ENCODE measurements at regions of chr6 and their contacts with region 1.

Region 1: GRCh38 chr6:83067448-83068413 is at the start of gene DOP1A:
- DNase-seq: peak; percentile 100
- H3K4me3 ChIP-seq: peak within 1 kb of the TSS; percentile 81 to 97 (median 92)
- H3K27ac ChIP-seq: peak within 1 kb of the TSS; percentile 83 to 95 (median 94)
- H3K4me1 ChIP-seq: peaks cover 3 to 84% (median 61%) of the 10 kb centered on the region in 6 donors
- H3K27me3 ChIP-seq: no peaks in the 10 kb centered on the region
- CTCF ChIP-seq: peak; percentile 80 to 98 (median 95)
- POLR2A ChIP-seq: no peak
- total RNA-seq, gene DOP1A: 23.0 to 47.6 (median 30.3) TPM

Region 2: DNA sequence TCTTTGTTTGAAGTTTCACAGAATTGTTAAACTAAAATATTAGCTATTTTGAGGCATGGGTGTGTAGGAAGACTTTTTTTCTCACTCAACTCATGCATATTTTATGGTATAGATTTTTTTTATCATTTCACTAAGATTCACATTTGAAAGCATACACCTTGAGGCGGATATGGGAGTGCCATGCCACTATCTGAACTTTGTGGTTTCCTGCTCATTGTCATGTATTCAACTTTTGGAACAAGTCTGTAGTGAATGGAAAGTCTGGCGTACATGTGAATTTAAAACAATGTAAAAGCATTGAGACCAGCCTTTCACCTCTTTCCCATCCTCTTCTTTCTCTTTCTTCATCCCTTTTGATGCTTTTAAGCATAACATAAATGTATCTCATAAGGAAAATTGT is 556.2 kb before region 1 on chr6:
- intact Hi-C with region 1: no loop called
- DNase-seq: no peak
- H3K4me3 ChIP-seq: no peak overlapping the region
- H3K27ac ChIP-seq: no peak overlapping the region
- H3K4me1 ChIP-seq: no peaks in the 10 kb centered on the region
- H3K27me3 ChIP-seq: no peaks in the 10 kb centered on the region
- CTCF ChIP-seq: no peak
- POLR2A ChIP-seq: no peak

Region 3: DNA sequence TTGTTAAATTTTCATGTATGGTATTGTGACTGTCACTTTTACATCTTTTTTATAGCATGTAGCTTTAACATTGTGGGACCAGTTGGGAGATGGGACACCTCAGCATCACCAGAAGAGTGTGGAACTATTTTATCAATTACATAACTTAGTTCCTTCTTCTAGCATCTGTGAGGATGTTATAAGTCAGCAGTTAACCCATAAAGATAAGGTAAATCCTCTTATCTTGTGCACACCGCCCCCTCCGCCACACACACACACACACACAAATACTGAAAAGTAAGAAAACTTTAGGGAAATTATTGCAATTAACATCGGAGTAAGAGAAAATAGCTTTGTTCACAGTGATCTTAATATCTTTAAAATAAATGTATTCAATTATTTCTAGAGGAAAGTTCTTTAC is 64.4 kb after region 1 on chr6:
- intact Hi-C with region 1: no loop called
- DNase-seq: no peak
- H3K4me3 ChIP-seq: no peak overlapping the region
- H3K27ac ChIP-seq: no peak overlapping the region
- H3K4me1 ChIP-seq: no peaks in the 10 kb centered on the region
- H3K27me3 ChIP-seq: no peaks in the 10 kb centered on the region
- CTCF ChIP-seq: no peak
- POLR2A ChIP-seq: no peak

Region 4: DNA sequence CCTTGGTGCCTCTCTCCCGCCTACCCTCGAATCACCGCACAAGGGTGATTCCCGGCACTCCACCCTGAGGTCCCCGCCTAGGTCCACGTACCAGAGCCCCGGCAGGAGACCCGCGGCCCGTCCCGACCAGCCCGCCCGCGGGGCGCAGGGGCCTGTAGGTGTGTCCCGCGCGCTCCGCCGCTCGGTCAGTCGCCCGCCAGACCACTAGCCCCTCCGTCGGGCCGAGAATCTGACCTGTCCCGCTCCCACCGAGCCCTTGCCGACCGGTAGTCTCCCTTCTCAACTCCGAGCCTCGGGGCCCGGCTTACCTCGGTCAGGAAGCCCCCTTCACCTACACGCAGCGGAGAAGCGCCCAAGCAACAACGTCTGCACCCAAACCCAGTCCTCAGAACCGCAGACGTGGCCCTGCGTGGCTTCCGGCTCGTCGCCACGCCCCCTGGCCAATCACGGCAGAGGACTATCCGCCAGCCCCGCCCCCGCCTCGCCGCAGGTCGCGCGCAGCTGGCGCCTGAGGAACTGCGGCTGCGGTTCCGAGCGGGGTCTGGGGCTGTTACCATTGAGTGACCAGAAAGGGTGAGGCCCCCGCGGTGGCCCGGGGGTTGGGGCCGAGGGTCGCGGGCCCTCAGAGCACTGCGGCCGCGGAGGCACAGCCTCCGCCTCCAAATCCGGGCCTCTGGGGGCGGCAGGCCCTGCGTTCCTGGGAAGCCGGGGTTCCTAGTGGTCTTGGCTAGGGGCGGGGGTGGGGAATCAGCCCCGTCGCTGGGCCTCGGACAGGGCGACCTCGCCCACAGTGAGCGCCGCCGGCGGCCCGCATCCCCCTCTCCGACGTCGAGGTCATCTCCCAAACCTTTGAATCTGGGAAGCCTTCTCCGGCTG is 125.4 kb after region 1 on chr6 and contains the starts of genes PGM3 and RWDD2A:
- intact Hi-C with region 1: loop called (anchors 10 kb)
- DNase-seq: peak; percentile 97
- H3K4me3 ChIP-seq: peak within 1 kb of the TSS; percentile 66 to 94 (median 84)
- H3K27ac ChIP-seq: peak within 1 kb of the TSS; percentile 30 to 88 (median 83)
- H3K4me1 ChIP-seq: peaks cover 13 to 59% (median 29%) of the 10 kb centered on the region in 6 donors
- H3K27me3 ChIP-seq: no peaks in the 10 kb centered on the region
- CTCF ChIP-seq: peak in 3 of 11 experiments; percentile 16 to 36 (median 24)
- POLR2A ChIP-seq: peak in 2 of 3 donors; percentile 50 to 58
- total RNA-seq, gene PGM3: 13.2 to 32.9 (median 26.5) TPM
- total RNA-seq, gene RWDD2A: 1.9 to 4.2 (median 3.8) TPM